Endothelial cell of umbilical vein (primary cell): ENCODE measurements at regions of chr7 and their contacts with region 1.

Region 1: DNA sequence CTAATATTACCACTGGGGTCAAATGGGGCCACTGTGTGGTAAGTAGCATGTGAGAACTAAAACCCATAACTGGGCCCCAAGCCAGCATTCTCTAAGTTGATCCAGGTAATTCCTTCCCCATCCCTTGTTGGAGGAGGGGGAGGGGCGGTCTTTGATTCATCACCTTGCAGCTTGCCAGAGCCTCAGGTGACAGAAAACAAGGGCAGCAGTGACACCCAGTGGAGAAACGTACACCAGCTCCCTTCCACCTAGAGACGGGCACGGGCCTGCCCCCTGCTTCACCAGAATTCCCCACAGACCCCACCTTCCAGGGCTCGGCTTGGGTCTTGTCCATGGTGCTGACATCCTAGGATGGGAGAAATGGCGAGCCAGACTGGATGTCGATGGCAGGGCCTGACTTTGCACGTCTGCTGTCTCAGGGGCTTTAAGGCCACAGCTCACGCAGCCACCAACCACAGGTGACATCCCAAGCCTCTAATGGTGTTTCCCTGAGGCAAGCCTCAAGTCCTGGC is 102.0 kb downstream of the STRA8 start:
- DNase-seq: peak; percentile 73
- H3K4me3 ChIP-seq: no peak overlapping the region
- H3K27ac ChIP-seq: no peak overlapping the region
- H3K4me1 ChIP-seq: peaks cover 6% of the 10 kb centered on the region
- H3K27me3 ChIP-seq: no peaks in the 10 kb centered on the region
- CTCF ChIP-seq: peak; percentile 39 to 40
- POLR2A ChIP-seq: no peak

Region 2: GRCh38 chr7:135291809-135292253 is 43.9 kb before region 1 on chr7:
- CTCF ChIA-PET with region 1: interaction called, 10 read pairs
- POLR2A ChIA-PET with region 1: no interaction called
- dilution Hi-C with region 1: no loop called
- intact Hi-C with region 1: loop called (anchors 2 kb)
- DNase-seq: peak; percentile 97
- H3K4me3 ChIP-seq: no peak overlapping the region
- H3K27ac ChIP-seq: peak overlapping the region; percentile 100
- H3K4me1 ChIP-seq: peaks cover 22% of the 10 kb centered on the region
- H3K27me3 ChIP-seq: no peaks in the 10 kb centered on the region
- CTCF ChIP-seq: no peak
- POLR2A ChIP-seq: peak; percentile 73

Region 3: DNA sequence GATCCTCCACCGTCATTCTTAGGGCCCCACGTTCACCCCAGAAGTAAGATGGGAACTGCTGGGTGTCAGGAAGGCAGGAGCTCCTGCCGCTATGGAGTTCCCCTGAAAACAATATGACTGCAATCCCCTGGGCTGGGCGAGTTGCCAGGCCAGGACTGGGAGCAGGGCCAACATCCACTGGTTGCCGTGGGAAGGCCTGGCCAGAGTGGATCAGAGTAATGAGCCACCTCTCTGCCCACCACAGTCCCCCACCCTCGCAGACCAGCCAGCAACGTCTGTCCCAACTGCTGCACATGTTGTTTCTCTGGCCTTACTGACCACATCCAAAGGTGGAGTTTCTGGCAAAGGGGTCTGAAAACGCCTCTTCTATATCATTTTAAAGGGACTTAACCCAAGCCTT is 15.4 kb before region 1 on chr7:
- CTCF ChIA-PET with region 1: interaction called, 5 read pairs
- POLR2A ChIA-PET with region 1: no interaction called
- dilution Hi-C with region 1: no loop called
- intact Hi-C with region 1: loop called (anchors 2 kb)
- DNase-seq: peak; percentile 97
- H3K4me3 ChIP-seq: no peak overlapping the region
- H3K27ac ChIP-seq: peak overlapping the region; percentile 16
- H3K4me1 ChIP-seq: peaks cover 11% of the 10 kb centered on the region
- H3K27me3 ChIP-seq: no peaks in the 10 kb centered on the region
- CTCF ChIP-seq: no peak
- POLR2A ChIP-seq: no peak